HepG2 (cell line): ENCODE measurements at regions of chr4 and their contacts with region 1.

Region 1: GRCh38 chr4:24260923-24261581 is 323.3 kb downstream of the DHX15 start:
- DNase-seq: no peak
- ATAC-seq: no peak
- H3K4me3 ChIP-seq: no peak overlapping the region
- H3K27ac ChIP-seq: no peak overlapping the region
- H3K4me1 ChIP-seq: no peaks in the 10 kb centered on the region
- H3K27me3 ChIP-seq: 0 out of 5 replicates have a peak, but pooled peaks cover 0 to 5% of the 10 kb centered on the region in 2 experiments
- CTCF ChIP-seq: no peak
- EP300 ChIP-seq: no peak
- POLR2A ChIP-seq: no peak
- RAD21 ChIP-seq: no peak

Region 2: DNA sequence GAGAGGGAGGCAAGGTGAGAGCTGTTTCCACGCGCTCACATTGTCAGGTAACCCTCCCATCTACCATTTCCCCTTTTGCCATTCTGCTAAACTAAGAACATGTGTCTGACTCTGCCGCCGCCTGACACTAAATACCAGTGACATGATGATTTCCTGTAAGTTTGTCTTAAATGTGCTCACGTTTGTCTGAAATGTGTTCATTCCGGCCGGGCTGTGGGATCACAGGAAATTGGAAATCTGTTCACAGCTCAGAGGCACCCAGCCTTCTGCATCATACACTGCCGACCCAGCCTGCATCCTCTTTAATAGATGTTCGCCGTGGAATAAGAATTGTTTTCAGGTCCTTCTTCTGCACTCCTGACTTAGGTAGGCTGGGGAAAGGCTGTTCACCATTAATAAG is 35.0 kb before region 1 on chr4:
- CTCF ChIA-PET with region 1: no interaction called
- POLR2A ChIA-PET with region 1: no interaction called
- in situ Hi-C with region 1: no loop called
- intact Hi-C with region 1: no loop called
- DNase-seq: no peak
- ATAC-seq: no peak
- H3K4me3 ChIP-seq: no peak overlapping the region
- H3K27ac ChIP-seq: no peak overlapping the region
- H3K4me1 ChIP-seq: no peaks in the 10 kb centered on the region
- H3K27me3 ChIP-seq: no peaks in the 10 kb centered on the region
- CTCF ChIP-seq: no peak
- EP300 ChIP-seq: no peak
- POLR2A ChIP-seq: no peak
- RAD21 ChIP-seq: no peak

Region 3: DNA sequence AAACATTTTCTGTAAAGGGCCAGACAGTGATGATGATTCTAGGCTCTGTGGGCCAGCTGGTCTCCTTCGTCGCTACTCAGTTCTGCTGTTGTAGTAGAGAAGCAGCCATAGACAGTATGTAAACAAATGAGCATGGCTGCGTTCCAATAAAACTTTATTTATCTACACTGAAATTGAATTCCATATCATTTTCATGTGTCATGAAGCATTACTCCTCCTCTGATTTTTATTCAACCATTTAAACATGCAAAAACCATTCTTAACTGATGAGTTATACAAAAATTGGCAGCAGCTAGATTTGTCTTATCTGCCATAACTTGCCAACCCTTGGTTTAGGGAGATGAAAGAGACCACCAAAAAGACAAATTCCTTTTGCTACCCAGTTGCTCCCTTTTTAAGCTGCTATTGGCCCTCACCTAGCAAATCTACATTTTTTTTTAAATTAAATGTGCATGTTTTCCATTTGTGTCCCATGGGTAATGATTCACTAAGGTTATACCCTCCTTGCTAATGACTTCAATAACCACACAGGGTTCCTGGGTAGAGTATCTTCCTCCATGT is 13.4 kb after region 1 on chr4:
- CTCF ChIA-PET with region 1: no interaction called
- POLR2A ChIA-PET with region 1: no interaction called
- in situ Hi-C with region 1: no loop called
- intact Hi-C with region 1: loop called (anchors 1 kb)
- DNase-seq: no peak
- ATAC-seq: no peak
- H3K4me3 ChIP-seq: no peak overlapping the region
- H3K27ac ChIP-seq: no peak overlapping the region
- H3K4me1 ChIP-seq: no peaks in the 10 kb centered on the region
- H3K27me3 ChIP-seq: no peaks in the 10 kb centered on the region
- CTCF ChIP-seq: no peak
- EP300 ChIP-seq: no peak
- POLR2A ChIP-seq: no peak
- RAD21 ChIP-seq: no peak

Region 4: GRCh38 chr4:24285759-24286158 is 24.7 kb after region 1 on chr4:
- CTCF ChIA-PET with region 1: no interaction called
- POLR2A ChIA-PET with region 1: no interaction called
- in situ Hi-C with region 1: no loop called
- intact Hi-C with region 1: no loop called
- DNase-seq: no peak
- ATAC-seq: no peak
- H3K4me3 ChIP-seq: no peak overlapping the region
- H3K27ac ChIP-seq: no peak overlapping the region
- H3K4me1 ChIP-seq: no peaks in the 10 kb centered on the region
- H3K27me3 ChIP-seq: no peaks in the 10 kb centered on the region
- CTCF ChIP-seq: no peak
- EP300 ChIP-seq: no peak
- POLR2A ChIP-seq: no peak
- RAD21 ChIP-seq: no peak

Region 5: GRCh38 chr4:24404281-24404680 is 143.2 kb after region 1 on chr4:
- CTCF ChIA-PET with region 1: no interaction called
- POLR2A ChIA-PET with region 1: no interaction called
- in situ Hi-C with region 1: no loop called
- intact Hi-C with region 1: no loop called
- DNase-seq: no peak
- ATAC-seq: no peak
- H3K4me3 ChIP-seq: no peak overlapping the region
- H3K27ac ChIP-seq: no peak overlapping the region
- H3K4me1 ChIP-seq: no peaks in the 10 kb centered on the region
- H3K27me3 ChIP-seq: no peaks in the 10 kb centered on the region
- CTCF ChIP-seq: no peak
- EP300 ChIP-seq: no peak
- POLR2A ChIP-seq: no peak
- RAD21 ChIP-seq: no peak

Region 6: GRCh38 chr4:25312496-25313200 is 1051.6 kb after region 1 on chr4 and contains the start of gene ZCCHC4:
- CTCF ChIA-PET with region 1: no interaction called
- POLR2A ChIA-PET with region 1: no interaction called
- in situ Hi-C with region 1: no loop called
- intact Hi-C with region 1: no loop called
- DNase-seq: peak; percentile 77
- ATAC-seq: peak; percentile 93
- H3K4me3 ChIP-seq: peak within 1 kb of the TSS; percentile 79 to 98 (median 96)
- H3K27ac ChIP-seq: peak within 1 kb of the TSS; percentile 92
- H3K4me1 ChIP-seq: peaks cover 46% of the 10 kb centered on the region
- H3K27me3 ChIP-seq: no peaks in the 10 kb centered on the region
- CTCF ChIP-seq: peak; percentile 99
- EP300 ChIP-seq: peak; percentile 57 to 60; a peak in 3 of 4 replicates
- POLR2A ChIP-seq: peak; percentile 79 to 85
- RAD21 ChIP-seq: peak; percentile 78
- total RNA-seq, gene ZCCHC4: 15.0 and 16.9 TPM in 2 replicates